Activated CD8-positive, alpha-beta memory T cell treated with anti-CD3 and anti-CD28 coated beads, Interleukin-2, amount 10 ng/mL, durations not matched to agents 7 days and 5 days (primary cell): ENCODE measurements at regions of chr12 and their contacts with region 1.

Region 1: DNA sequence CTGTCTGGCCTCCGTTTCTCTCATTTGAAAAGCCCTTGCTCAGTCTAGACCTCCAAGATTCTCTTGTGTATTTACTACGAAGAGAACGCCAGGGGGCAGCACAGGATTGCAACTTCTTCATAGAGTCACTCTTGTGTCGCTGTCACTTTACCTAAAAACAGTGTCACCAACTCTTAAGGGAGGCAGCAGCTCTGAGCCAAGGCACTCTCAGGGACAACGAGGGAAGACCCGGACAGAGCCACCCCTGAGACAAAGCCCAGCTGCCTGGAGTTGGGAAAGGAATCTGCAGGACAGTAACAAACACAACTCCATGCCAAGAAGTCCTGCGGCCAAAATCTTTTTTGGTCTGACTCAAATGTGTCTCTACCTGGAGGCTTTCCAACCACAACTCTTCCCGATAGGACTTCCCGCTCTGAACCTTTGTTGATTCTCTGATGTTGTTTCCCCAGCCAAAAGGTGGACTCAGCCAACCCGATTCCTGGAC is 9.6 kb upstream of the RPAP3 start:
- DNase-seq: peak; percentile 88
- ATAC-seq: peak; percentile 89
- H3K4me3 Mint-ChIP-seq: no peak overlapping the region
- H3K27ac Mint-ChIP-seq: peak overlapping the region; percentile 44
- H3K4me1 Mint-ChIP-seq: peaks cover 27% of the 10 kb centered on the region
- H3K27me3 Mint-ChIP-seq: no peaks in the 10 kb centered on the region

Region 2: GRCh38 chr12:47547085-47547484 is 168.3 kb before region 1 on chr12:
- CTCF ChIA-PET with region 1: no interaction called
- DNase-seq: no peak
- ATAC-seq: no peak
- H3K4me3 Mint-ChIP-seq: no peak overlapping the region
- H3K27ac Mint-ChIP-seq: no peak overlapping the region
- H3K4me1 Mint-ChIP-seq: peaks cover 1% of the 10 kb centered on the region
- H3K27me3 Mint-ChIP-seq: peaks cover 2% of the 10 kb centered on the region

Region 3: DNA sequence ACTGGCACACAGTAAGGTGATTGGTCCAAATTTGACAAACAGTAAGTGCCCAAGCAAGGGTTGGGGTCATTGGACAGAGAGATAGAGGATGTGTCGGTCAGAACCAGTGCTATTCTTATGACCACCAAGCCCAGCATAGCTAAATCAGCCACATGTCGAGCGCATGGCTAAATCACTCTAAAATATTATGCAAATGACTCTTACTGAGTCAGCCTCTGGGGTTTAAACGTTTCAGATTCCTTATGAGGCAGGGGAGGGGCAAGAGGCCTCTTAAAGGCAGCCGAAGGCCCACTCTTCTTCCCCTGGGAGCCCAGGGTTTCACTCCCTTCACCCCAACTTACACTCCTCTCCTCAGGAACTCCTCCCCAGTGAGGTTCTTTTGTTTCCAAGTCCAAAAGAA is 10.5 kb after region 1 on chr12:
- CTCF ChIA-PET with region 1: interaction called, 39 read pairs
- DNase-seq: no peak
- ATAC-seq: no peak
- H3K4me3 Mint-ChIP-seq: no peak overlapping the region
- H3K27ac Mint-ChIP-seq: no peak overlapping the region
- H3K4me1 Mint-ChIP-seq: peaks cover 34% of the 10 kb centered on the region
- H3K27me3 Mint-ChIP-seq: no peaks in the 10 kb centered on the region

Region 4: DNA sequence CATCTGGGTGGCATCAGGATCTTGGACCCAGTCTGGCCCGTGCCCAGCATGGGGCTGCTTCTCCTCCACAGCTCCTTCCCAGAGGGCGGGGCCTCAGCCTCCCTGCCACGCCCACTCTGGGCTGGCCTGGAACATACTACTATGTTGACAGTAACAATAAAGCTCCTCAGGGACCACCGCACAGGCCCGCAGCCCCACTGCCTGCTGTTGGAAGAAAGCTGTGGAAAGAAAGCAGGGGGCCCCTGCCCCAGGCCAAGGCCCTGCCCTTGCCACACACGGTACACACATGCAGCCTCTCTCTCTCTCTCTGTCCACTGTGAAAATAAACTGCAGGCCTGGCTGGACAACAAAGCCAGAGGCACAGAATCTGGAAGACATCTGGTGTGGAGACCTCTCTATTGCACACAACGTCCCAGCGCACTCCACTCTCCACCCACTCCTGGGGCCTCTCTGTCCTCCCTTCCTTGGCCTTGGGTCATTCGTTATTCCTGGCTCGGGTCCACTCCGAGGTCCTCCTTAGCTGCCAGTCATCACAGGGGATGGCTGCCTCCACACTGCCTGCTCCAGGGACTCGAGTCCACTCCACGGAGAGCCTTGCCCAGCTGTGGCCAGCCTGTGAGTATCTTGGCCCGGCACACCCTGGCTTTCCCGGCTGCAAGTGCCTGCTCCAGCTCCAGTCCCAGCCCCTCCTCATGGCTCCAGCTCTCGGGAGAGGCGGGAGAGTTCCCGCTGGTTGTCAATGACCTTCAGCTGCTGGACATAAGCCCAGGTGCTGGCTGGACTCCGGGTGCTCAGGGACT is 21.6 kb after region 1 on chr12:
- CTCF ChIA-PET with region 1: interaction called, 341 read pairs
- DNase-seq: no peak
- ATAC-seq: no peak
- H3K4me3 Mint-ChIP-seq: no peak overlapping the region
- H3K27ac Mint-ChIP-seq: no peak overlapping the region
- H3K4me1 Mint-ChIP-seq: peaks cover 9% of the 10 kb centered on the region
- H3K27me3 Mint-ChIP-seq: no peaks in the 10 kb centered on the region

Region 5: GRCh38 chr12:47758834-47759690 is 43.6 kb after region 1 on chr12 and contains the start of gene RAPGEF3:
- CTCF ChIA-PET with region 1: interaction called, 91 read pairs
- DNase-seq: peak; percentile 80
- ATAC-seq: peak; percentile 87
- H3K4me3 Mint-ChIP-seq: peak within 1 kb of the TSS; percentile 70
- H3K27ac Mint-ChIP-seq: peak within 1 kb of the TSS; percentile 45
- H3K4me1 Mint-ChIP-seq: peaks cover 47% of the 10 kb centered on the region
- H3K27me3 Mint-ChIP-seq: peaks cover 2% of the 10 kb centered on the region
- total RNA-seq, gene RAPGEF3: 1.5 to 1.9 TPM

Region 6: DNA sequence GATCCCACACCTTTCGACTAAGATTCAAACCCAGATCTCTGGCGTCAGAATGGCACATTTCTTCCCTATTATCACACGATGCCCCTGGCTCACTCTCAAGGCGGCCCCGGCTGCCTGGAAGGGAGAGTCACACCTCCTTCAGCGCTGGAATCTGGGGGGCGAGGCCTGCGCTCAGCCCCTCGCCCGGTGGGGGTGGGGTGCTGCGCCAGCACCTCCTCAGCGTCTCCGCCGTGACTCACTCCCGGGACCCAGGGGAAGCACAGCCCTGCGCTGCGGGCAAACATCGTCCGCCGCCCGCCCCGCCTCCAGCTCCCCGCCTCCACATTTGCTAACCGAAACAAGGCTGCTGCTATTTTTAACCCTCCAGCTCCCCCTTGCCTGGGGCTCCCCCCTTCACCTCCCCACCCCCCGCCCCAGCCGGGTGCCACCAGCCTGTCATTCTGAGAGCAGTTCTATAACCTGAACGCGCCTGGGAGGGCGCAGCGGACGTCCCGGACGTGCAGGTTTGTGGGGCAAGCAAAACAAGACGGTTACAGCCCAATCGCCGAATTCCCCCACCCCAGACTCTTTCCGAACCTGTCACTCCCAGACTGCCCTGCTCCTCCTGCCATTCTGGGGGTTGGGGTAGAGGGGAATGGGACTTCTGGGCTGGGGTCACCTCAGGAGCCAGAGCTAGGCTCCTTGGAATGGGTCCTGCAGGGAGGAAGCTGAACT is 97.5 kb after region 1 on chr12:
- CTCF ChIA-PET with region 1: interaction called, 10 read pairs
- DNase-seq: peak; percentile 98
- ATAC-seq: peak; percentile 73
- H3K4me3 Mint-ChIP-seq: peak overlapping the region; percentile 91
- H3K27ac Mint-ChIP-seq: peak overlapping the region; percentile 96
- H3K4me1 Mint-ChIP-seq: peaks cover 87% of the 10 kb centered on the region
- H3K27me3 Mint-ChIP-seq: no peaks in the 10 kb centered on the region

Region 7: DNA sequence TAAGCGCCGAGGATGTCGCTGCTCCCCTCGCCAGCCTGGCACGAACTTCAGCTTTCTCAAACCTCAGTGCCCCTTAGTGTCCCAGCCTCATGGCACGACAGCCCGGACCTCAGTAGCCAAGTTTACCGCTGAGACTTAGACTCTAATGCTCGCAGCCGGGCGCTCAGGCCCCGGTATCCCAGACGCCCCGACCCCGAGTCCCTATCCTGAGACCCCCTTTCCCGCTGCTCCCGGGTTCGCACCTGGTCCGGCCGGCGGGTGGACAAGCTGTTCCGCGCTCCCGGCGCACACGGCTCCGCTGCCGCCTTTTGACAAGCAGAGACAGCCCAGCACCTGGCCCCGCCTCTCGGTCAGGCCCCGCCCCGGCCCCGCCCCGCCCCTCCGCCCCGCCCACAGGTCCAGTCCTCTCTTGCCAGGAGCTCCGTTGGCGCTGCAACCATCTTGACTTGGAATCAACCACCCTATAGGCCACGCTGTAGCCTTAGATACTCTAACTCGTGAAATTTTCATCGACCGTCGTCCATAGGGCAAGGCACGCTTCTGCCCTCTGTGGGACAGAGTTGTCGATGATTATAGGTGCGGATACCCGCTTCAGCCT is 189.4 kb after region 1 on chr12 and contains the start of gene VDR:
- CTCF ChIA-PET with region 1: no interaction called
- DNase-seq: peak; percentile 85
- ATAC-seq: peak; percentile 78
- H3K4me3 Mint-ChIP-seq: peak within 1 kb of the TSS; percentile 85
- H3K27ac Mint-ChIP-seq: peak within 1 kb of the TSS; percentile 86
- H3K4me1 Mint-ChIP-seq: peaks cover 43% of the 10 kb centered on the region
- H3K27me3 Mint-ChIP-seq: peaks cover 34% of the 10 kb centered on the region
- total RNA-seq, gene VDR: 34.9 to 69.8 TPM